Transverse colon (tissue), 4 donors: ENCODE measurements at regions of chr11 and their contacts with region 1.

Region 1: GRCh38 chr11:74948898-74949747 is at the starts of genes SPCS2 and XRRA1:
- DNase-seq: peak; percentile 99
- H3K4me3 ChIP-seq: peak within 1 kb of the TSS; percentile 72 to 97 (median 86)
- H3K27ac ChIP-seq: peak within 1 kb of the TSS; percentile 84 to 89 (median 86)
- H3K4me1 ChIP-seq: peaks cover 11 to 54% (median 25%) of the 10 kb centered on the region in 4 donors
- H3K27me3 ChIP-seq: no peaks in the 10 kb centered on the region
- CTCF ChIP-seq: no peak
- EP300 ChIP-seq: no peak
- POLR2A ChIP-seq: peak; percentile 84
- total RNA-seq, gene SPCS2: 6.4 to 59.9 (median 21.0) TPM
- total RNA-seq, gene XRRA1: 5.7 to 61.0 (median 17.2) TPM

Region 2: DNA sequence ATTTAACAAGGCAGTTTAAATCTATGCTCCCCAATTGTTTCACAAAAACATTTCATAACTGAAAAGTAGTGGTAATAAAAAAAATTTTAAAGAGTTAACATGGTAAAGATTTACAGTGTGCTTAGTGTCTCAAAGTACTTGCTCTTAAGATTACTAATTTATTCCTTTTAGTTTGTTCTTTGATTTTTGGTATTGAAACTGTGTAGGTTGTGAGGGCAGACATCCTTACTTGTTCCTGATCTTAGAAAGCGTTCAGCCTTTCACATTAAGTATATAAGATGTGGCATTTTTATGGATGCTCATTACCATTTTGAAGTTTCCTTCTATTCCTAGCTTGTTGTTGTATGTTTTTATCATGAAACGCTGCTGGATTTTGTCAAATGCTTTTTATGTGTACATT is 1221.1 kb before region 1 on chr11:
- in situ Hi-C with region 1: no loop called
- intact Hi-C with region 1: no loop called
- DNase-seq: no peak
- H3K4me3 ChIP-seq: no peak overlapping the region
- H3K27ac ChIP-seq: no peak overlapping the region
- H3K4me1 ChIP-seq: no peaks in the 10 kb centered on the region
- H3K27me3 ChIP-seq: no peaks in the 10 kb centered on the region
- CTCF ChIP-seq: no peak
- EP300 ChIP-seq: no peak
- POLR2A ChIP-seq: no peak

Region 3: DNA sequence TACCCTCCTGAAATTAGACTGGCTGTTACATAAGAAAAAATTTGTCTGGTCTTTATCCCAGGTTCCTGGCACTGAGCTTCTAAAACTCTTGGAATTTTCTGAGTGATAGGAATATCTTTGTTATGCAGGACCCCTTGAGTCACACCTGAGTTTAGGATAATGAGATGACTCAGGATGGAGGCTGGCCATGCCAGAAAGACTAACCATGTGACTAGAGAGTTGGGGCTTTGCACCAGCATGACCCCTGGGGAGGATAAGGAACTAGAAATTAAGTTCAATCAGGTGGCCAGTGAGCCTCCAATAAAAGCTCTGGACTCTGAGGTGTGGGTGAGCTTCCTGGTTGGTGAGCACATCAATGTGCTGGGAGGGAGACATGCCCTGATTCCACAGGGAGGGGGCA is 88.4 kb before region 1 on chr11:
- in situ Hi-C with region 1: no loop called
- intact Hi-C with region 1: no loop called
- DNase-seq: no peak
- H3K4me3 ChIP-seq: no peak overlapping the region
- H3K27ac ChIP-seq: no peak overlapping the region
- H3K4me1 ChIP-seq: no peaks in the 10 kb centered on the region
- H3K27me3 ChIP-seq: no peaks in the 10 kb centered on the region
- CTCF ChIP-seq: no peak
- EP300 ChIP-seq: no peak
- POLR2A ChIP-seq: no peak

Region 4: GRCh38 chr11:75241036-75241905 is 292.1 kb after region 1 on chr11:
- in situ Hi-C with region 1: loop called in 3 of 4 experiments (anchors 25 kb)
- intact Hi-C with region 1: no loop called
- DNase-seq: peak; percentile 87
- H3K4me3 ChIP-seq: peak overlapping the region in 3 of 4 donors; percentile 19 to 49 (median 40)
- H3K27ac ChIP-seq: peak overlapping the region in 1 of 4 donors; percentile 6
- H3K4me1 ChIP-seq: peaks cover 0 to 16% (median 11%) of the 10 kb centered on the region in 4 donors
- H3K27me3 ChIP-seq: peaks cover 57% of the 10 kb centered on the region
- CTCF ChIP-seq: peak in 4 of 5 experiments; percentile 22 to 90 (median 69)
- EP300 ChIP-seq: no peak
- POLR2A ChIP-seq: no peak

Region 5: GRCh38 chr11:75384438-75385080 is 435.4 kb after region 1 on chr11:
- in situ Hi-C with region 1: no loop called
- intact Hi-C with region 1: no loop called
- DNase-seq: peak; percentile 85
- H3K4me3 ChIP-seq: no peak overlapping the region
- H3K27ac ChIP-seq: peak overlapping the region in 2 of 4 donors; percentile 69 to 75
- H3K4me1 ChIP-seq: peaks cover 8 to 65% (median 31%) of the 10 kb centered on the region in 4 donors
- H3K27me3 ChIP-seq: no peaks in the 10 kb centered on the region
- CTCF ChIP-seq: peak; percentile 96 to 98 (median 97)
- EP300 ChIP-seq: no peak
- POLR2A ChIP-seq: no peak